ENCODE measurements at regions of chr19 and their contacts with region 1.

Region 1: GRCh38 chr19:45902651-45903625 is 525 bp upstream of the MYPOP start:
- DNase-seq: peak; percentile 99
- ATAC-seq: peak; percentile 84
- H3K4me3 Mint-ChIP-seq: peak overlapping the region; percentile 91
- H3K27ac Mint-ChIP-seq: peak overlapping the region; percentile 57; the same call in 1 of the 2 replicates
- H3K4me1 Mint-ChIP-seq: peaks cover 12% of the 10 kb centered on the region
- H3K27me3 Mint-ChIP-seq: peaks cover 25% of the 10 kb centered on the region
- CTCF ChIP-seq: no peak

Region 2: GRCh38 chr19:45730389-45731288 is 172.3 kb before region 1 on chr19 and contains the start of gene FBXO46:
- CTCF ChIA-PET with region 1: no interaction called
- POLR2A ChIA-PET with region 1: no interaction called
- DNase-seq: peak; percentile 97
- ATAC-seq: peak; percentile 97
- H3K4me3 Mint-ChIP-seq: peak within 1 kb of the TSS; percentile 93
- H3K27ac Mint-ChIP-seq: peak within 1 kb of the TSS; percentile 89
- H3K4me1 Mint-ChIP-seq: peaks cover 12% of the 10 kb centered on the region
- H3K27me3 Mint-ChIP-seq: peaks cover 7% of the 10 kb centered on the region; the same call in 1 of the 2 replicates
- CTCF ChIP-seq: no peak
- total RNA-seq, gene FBXO46: 40.1 to 46.3 TPM (median 43.3 TPM) in 3 replicates

Region 3: GRCh38 chr19:45827459-45828093 is 75.4 kb before region 1 on chr19:
- CTCF ChIA-PET with region 1: no interaction called
- POLR2A ChIA-PET with region 1: no interaction called
- DNase-seq: no peak
- ATAC-seq: peak; percentile 52
- H3K4me3 Mint-ChIP-seq: no peak overlapping the region
- H3K27ac Mint-ChIP-seq: peak overlapping the region; percentile 58; the same call in 1 of the 2 replicates
- H3K4me1 Mint-ChIP-seq: no peaks in the 10 kb centered on the region
- H3K27me3 Mint-ChIP-seq: no peaks in the 10 kb centered on the region
- CTCF ChIP-seq: no peak

Region 4: DNA sequence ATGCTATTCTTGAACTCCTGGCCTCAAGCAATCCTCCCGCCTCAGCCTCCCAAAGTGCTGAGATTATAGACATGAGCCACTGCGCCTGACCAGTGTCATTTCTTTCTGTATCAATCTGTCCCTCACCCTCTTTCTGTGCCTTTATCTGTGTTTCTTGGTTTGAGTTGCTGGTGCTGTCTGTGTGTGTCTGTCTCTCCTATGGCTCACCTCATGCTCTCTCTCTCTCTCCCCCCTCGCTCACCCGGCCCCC is 26.9 kb before region 1 on chr19:
- CTCF ChIA-PET with region 1: no interaction called
- POLR2A ChIA-PET with region 1: no interaction called
- DNase-seq: no peak
- ATAC-seq: no peak; the same call in 1 of the 2 replicates
- H3K4me3 Mint-ChIP-seq: peak overlapping the region; percentile 71
- H3K27ac Mint-ChIP-seq: peak overlapping the region; percentile 63
- H3K4me1 Mint-ChIP-seq: peaks cover 44% of the 10 kb centered on the region
- H3K27me3 Mint-ChIP-seq: no peaks in the 10 kb centered on the region
- CTCF ChIP-seq: no peak

Region 5: DNA sequence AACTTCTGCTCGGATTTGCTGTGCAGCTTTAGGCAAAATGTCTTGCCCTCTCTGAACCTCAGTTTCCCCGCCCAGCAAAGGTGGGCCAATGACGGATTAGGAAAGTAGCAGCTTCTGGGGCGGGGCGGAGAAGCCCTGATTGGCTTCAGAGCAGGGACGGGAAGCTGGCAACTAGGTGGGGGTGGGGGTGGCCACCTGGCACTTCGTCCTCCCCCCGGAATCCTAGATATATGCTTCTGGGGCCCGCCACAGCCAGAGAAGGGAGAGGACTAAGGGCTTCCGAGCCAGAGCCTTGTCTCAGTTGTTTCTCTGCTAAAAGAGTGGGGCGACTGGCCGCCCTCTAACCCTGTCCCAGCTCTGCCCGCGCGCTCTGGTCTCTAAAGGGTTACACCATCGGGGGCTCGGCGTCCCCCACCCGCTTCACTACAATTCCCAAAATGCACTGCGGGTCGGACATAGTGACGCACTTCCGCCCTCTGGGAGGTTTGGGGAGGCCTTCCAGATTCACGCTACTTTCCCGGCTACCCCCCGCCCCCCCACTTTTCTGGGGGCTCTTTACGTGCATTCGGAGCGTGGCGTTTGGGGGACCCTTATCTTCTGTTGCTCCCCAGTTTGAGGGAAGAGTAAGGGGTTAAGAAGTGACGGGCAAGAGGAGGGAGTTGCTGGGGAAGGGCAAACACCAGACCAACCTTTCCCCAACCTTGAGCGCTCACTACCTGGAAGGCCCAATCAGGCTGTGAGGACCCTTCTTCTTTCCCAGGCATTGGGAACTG is 16.3 kb before region 1 on chr19:
- CTCF ChIA-PET with region 1: interaction called, 27 read pairs
- POLR2A ChIA-PET with region 1: interaction called, 14 read pairs
- DNase-seq: peak; percentile 92
- ATAC-seq: peak; percentile 49
- H3K4me3 Mint-ChIP-seq: peak overlapping the region; percentile 94
- H3K27ac Mint-ChIP-seq: peak overlapping the region; percentile 96
- H3K4me1 Mint-ChIP-seq: peaks cover 20% of the 10 kb centered on the region
- H3K27me3 Mint-ChIP-seq: no peaks in the 10 kb centered on the region
- CTCF ChIP-seq: no peak

Region 6: DNA sequence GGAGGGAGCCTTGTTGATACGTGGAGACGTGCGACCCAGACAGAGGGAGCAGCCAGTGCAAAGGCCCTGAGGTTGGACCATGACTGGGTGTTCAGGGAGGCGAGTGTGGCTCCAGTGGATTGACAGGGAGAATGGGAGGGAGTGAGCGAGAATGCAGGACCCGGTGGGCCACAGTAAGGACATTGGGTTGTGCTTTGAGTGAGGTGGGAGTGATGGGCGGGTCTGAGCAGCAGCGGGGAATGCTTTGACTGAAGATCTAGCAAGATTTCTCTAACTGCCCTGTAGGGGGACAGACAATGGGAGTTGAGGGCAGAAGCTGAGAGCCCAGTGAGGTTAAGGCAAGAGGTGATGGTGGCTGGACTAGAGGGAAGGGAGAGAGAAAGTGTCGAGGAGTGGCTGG is 19.3 kb after region 1 on chr19:
- CTCF ChIA-PET with region 1: interaction called, 10 read pairs
- POLR2A ChIA-PET with region 1: interaction called, 7 read pairs
- DNase-seq: peak; percentile 61
- ATAC-seq: peak; percentile 97
- H3K4me3 Mint-ChIP-seq: no peak overlapping the region
- H3K27ac Mint-ChIP-seq: no peak overlapping the region
- H3K4me1 Mint-ChIP-seq: peaks cover 2% of the 10 kb centered on the region; the same call in 1 of the 2 replicates
- H3K27me3 Mint-ChIP-seq: peaks cover 16% of the 10 kb centered on the region
- CTCF ChIP-seq: peak; percentile 38; the same call in 1 of the 2 replicates

Region 7: GRCh38 chr19:46009530-46010510 is 106.9 kb after region 1 on chr19:
- CTCF ChIA-PET with region 1: interaction called, 11 read pairs
- POLR2A ChIA-PET with region 1: interaction called, 4 read pairs
- DNase-seq: peak; percentile 89
- ATAC-seq: peak; percentile 90
- H3K4me3 Mint-ChIP-seq: no peak overlapping the region
- H3K27ac Mint-ChIP-seq: no peak overlapping the region
- H3K4me1 Mint-ChIP-seq: peaks cover 5% of the 10 kb centered on the region
- H3K27me3 Mint-ChIP-seq: peaks cover 14% of the 10 kb centered on the region
- CTCF ChIP-seq: peak; percentile 97